Left colon (tissue), 2 donors: ENCODE measurements at regions of chr11 and their contacts with region 1.

Region 1: GRCh38 chr11:4636962-4637661 is at the start of gene OR51D1:
- DNase-seq: peak; percentile 46 to 69
- ATAC-seq: peak; percentile 93
- total RNA-seq, gene OR51D1: not detected

Region 2: DNA sequence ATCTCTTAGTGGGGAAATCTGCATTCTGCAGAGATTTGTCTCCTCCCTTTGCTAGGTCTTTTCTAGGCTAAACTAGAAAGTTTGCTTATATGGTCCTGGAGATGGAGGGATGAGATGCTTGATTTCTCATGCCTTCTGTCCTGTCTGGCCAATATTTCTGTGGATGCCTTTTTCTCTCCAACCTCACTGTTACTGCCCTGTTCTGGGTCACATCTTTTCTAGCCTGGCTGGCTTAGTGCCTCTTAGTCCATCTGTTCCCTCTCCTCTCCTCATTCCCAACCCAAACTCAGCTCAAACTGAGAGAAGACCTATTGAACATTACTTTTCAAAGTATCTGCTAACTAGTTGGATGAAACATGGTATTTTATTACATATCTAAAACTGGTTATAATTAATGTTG is 480.5 kb before region 1 on chr11:
- intact Hi-C with region 1: no loop called
- DNase-seq: no peak
- ATAC-seq: no peak

Region 3: GRCh38 chr11:4589017-4589416 is 48.1 kb before region 1 on chr11:
- intact Hi-C with region 1: no loop called
- DNase-seq: no peak
- ATAC-seq: no peak

Region 4: DNA sequence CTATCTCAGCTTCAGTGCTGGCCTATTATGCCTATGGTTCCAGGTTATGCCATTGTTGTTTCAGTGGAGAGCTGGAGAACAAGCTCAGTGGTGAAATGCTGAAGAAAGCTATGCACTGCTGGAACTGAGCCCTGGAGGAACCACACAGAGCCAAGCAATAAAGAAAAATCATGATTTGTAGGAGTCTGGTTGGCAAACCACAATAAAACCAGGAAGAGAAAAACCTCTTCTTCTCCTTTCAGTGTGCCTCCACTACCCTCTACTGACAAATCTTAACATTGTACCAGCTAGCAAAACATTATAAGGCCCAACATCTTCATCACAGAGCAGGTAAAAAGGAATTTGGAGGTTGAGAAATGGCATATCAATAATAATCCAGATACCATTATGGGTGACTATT is 189.3 kb after region 1 on chr11:
- intact Hi-C with region 1: loop called in 1 of 2 experiments (anchors 2 kb)
- DNase-seq: no peak
- ATAC-seq: peak; percentile 68